ENCODE measurements at regions of chr3 and their contacts with region 1.

Region 1: DNA sequence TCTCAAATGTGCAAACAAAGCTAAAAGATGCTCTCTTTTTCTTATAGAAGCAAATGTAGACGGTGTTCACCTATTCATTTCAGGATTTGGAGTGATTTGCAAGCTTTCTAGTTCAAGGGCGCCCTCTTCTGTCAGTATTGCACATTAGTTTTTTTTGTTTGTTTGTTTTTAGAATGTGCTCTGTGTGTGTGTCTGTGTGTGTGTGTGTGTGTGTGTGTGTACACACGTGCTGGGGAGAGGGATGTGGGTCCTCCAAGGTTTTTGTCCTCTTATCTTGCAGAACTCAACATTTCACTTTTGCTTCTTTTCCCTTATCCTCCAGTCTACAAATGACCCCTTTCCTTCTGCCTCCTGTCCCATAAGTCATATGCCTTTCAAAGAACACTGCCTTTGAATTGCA is 23.5 kb downstream of the DNAH1 start:
- DNase-seq: peak; percentile 59
- ATAC-seq: peak; percentile 74
- H3K4me3 Mint-ChIP-seq: no peak overlapping the region
- H3K27ac Mint-ChIP-seq: peak overlapping the region; percentile 32
- H3K4me1 Mint-ChIP-seq: peaks cover 6% of the 10 kb centered on the region
- H3K27me3 Mint-ChIP-seq: no peaks in the 10 kb centered on the region

Region 2: GRCh38 chr3:52001443-52001974 is 338.1 kb before region 1 on chr3:
- CTCF ChIA-PET with region 1: interaction called, 6 read pairs
- POLR2A ChIA-PET with region 1: no interaction called
- intact Hi-C with region 1: loop called (anchors 1 kb)
- DNase-seq: peak; percentile 91
- ATAC-seq: peak; percentile 97
- H3K4me3 Mint-ChIP-seq: no peak overlapping the region
- H3K27ac Mint-ChIP-seq: no peak overlapping the region
- H3K4me1 Mint-ChIP-seq: peaks cover 16% of the 10 kb centered on the region
- H3K27me3 Mint-ChIP-seq: no peaks in the 10 kb centered on the region

Region 3: GRCh38 chr3:52231502-52232293 is 107.9 kb before region 1 on chr3:
- CTCF ChIA-PET with region 1: interaction called, 61 read pairs
- POLR2A ChIA-PET with region 1: no interaction called
- intact Hi-C with region 1: loop called (anchors 1 kb)
- DNase-seq: peak; percentile 89
- ATAC-seq: peak; percentile 66
- H3K4me3 Mint-ChIP-seq: no peak overlapping the region
- H3K27ac Mint-ChIP-seq: peak overlapping the region; percentile 63
- H3K4me1 Mint-ChIP-seq: peaks cover 44% of the 10 kb centered on the region
- H3K27me3 Mint-ChIP-seq: no peaks in the 10 kb centered on the region

Region 4: GRCh38 chr3:52291508-52292181 is 48.0 kb before region 1 on chr3:
- CTCF ChIA-PET with region 1: interaction called, 58 read pairs
- POLR2A ChIA-PET with region 1: no interaction called
- intact Hi-C with region 1: loop called (anchors 1 to 2 kb)
- DNase-seq: peak; percentile 66
- ATAC-seq: no peak
- H3K4me3 Mint-ChIP-seq: no peak overlapping the region
- H3K27ac Mint-ChIP-seq: no peak overlapping the region
- H3K4me1 Mint-ChIP-seq: peaks cover 16% of the 10 kb centered on the region
- H3K27me3 Mint-ChIP-seq: no peaks in the 10 kb centered on the region

Region 5: GRCh38 chr3:52328536-52329080 is 11.0 kb before region 1 on chr3:
- CTCF ChIA-PET with region 1: interaction called, 16 read pairs
- POLR2A ChIA-PET with region 1: no interaction called
- intact Hi-C with region 1: no loop called
- DNase-seq: no peak
- ATAC-seq: no peak
- H3K4me3 Mint-ChIP-seq: no peak overlapping the region
- H3K27ac Mint-ChIP-seq: no peak overlapping the region
- H3K4me1 Mint-ChIP-seq: no peaks in the 10 kb centered on the region
- H3K27me3 Mint-ChIP-seq: no peaks in the 10 kb centered on the region

Region 6: DNA sequence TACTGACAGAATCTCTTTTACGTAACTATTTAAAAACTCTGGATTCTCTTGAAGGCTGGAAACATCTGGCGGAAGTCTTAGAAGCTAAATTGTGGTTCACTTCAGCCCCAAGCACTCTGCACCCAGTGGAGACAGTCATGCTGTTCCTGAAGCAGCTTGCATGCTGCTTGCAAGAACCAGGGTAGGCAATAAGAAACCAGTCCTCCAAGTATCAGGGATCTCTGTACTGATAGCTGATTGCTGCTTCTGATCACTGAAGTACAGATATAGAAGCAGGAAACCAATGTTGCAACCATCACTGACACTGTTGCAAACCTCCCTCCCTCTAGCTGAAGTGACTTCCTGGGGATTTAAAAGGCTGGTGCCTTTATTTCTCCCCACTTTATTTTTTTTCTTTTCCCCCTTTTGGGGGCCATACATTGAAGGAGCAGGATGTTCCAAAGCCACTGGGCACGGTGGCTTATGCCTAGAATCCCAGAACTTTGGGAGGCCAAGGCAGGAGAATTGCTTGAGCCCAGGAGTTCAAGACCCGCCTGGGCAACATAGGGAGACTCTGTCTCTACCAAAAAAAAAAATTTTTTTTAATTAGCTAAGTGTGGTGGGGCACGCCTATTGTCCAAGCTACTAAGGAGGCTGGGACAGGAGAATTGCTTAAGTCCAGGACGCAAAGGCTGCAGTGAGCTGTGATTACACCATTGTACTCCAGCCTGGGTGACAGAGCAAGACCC is 381.6 kb after region 1 on chr3:
- CTCF ChIA-PET with region 1: no interaction called
- POLR2A ChIA-PET with region 1: no interaction called
- intact Hi-C with region 1: no loop called
- DNase-seq: peak; percentile 28
- ATAC-seq: peak; percentile 74
- H3K4me3 Mint-ChIP-seq: no peak overlapping the region
- H3K27ac Mint-ChIP-seq: peak overlapping the region; percentile 66
- H3K4me1 Mint-ChIP-seq: peaks cover 26% of the 10 kb centered on the region
- H3K27me3 Mint-ChIP-seq: no peaks in the 10 kb centered on the region